Esophagus muscularis mucosa (tissue), 4 donors: ENCODE measurements at regions of chr14 and their contacts with region 1.

Region 1: GRCh38 chr14:89618811-89619551 is 201.9 kb upstream of the FOXN3 start:
- DNase-seq: no peak
- H3K4me3 ChIP-seq: peak overlapping the region; percentile 60 to 93 (median 84)
- H3K27ac ChIP-seq: peak overlapping the region; percentile 73 to 80 (median 78)
- H3K4me1 ChIP-seq: peaks cover 14 to 46% (median 41%) of the 10 kb centered on the region in 4 donors
- H3K27me3 ChIP-seq: no peaks in the 10 kb centered on the region
- CTCF ChIP-seq: peak in 1 of 3 experiments; percentile 17
- EP300 ChIP-seq: no peak
- POLR2A ChIP-seq: no peak

Region 2: DNA sequence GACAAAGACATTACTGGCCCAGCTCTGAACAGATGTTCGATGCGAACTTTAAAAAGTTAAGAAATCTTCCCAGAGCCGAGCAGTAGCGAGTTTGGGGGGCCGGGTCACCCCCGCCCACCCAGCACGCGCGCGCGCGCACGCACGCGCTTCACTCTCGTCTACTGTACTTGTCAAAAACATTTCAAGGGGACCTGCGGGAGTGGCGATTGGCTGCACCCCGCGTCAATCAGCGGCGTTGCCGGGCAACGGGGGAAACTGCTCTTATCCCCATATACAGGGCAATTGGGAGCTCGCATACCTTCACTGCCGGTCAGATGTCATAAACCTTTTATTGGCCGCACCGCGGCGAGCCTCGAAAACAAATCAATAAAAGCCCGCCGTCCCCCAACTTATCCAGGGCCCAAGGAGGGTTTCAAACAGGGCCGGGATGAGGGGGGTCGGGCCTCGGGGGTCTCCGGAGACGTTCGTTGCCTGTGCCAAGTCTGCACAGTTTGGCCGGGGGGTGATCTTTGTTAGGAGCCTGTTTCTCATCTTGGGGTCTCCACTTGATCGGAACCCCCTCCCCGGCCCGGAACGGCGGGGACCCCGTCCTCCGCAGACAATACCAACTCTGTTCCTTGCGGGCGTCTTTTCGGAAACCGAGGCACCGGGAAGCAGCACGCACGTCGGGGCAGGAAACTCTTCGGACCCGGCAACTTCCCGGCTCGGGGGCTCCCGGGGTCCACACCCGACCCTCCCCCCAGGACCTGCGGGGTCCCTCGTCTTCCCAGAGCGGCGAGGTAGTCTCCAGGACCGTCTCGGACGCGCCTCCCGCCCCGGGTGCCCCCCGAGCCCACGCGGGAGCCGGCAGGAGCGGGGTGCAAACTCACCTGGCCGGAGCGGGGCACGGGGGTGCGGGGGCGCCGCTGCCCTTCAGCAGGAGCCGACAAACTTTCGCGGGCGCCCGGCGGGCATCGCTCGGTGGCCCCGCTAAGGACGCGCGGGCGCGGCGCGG is 202.7 kb before region 1 on chr14:
- intact Hi-C with region 1: loop called (anchors 5 kb)
- DNase-seq: peak; percentile 100
- H3K4me3 ChIP-seq: peak overlapping the region; percentile 78 to 94 (median 88)
- H3K27ac ChIP-seq: peak overlapping the region; percentile 96 to 99 (median 98)
- H3K4me1 ChIP-seq: peaks cover 27 to 56% (median 42%) of the 10 kb centered on the region in 4 donors
- H3K27me3 ChIP-seq: no peaks in the 10 kb centered on the region
- CTCF ChIP-seq: no peak
- EP300 ChIP-seq: no peak
- POLR2A ChIP-seq: no peak

Region 3: DNA sequence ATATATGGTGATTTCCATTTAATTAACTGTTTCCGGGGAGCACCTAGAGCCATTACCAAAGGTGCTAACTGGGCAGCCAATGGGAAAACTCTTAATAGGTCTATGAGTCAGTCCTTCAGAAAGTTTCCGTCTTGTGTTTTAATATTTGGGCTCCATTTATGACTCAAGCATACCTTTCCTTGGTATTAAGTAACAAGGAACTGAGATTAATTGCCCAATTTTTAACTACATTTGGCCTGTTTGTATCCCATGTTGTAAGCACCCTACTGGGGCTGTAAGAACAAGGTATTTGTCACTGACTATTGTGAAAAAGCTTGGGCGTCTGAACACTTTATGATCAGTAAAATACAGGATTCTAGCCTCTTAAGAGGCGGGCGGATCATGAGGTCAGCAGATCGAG is 139.2 kb before region 1 on chr14:
- intact Hi-C with region 1: no loop called
- DNase-seq: no peak
- H3K4me3 ChIP-seq: no peak overlapping the region
- H3K27ac ChIP-seq: no peak overlapping the region
- H3K4me1 ChIP-seq: no peaks in the 10 kb centered on the region
- H3K27me3 ChIP-seq: no peaks in the 10 kb centered on the region
- CTCF ChIP-seq: no peak
- EP300 ChIP-seq: no peak
- POLR2A ChIP-seq: no peak